ENCODE measurements at regions of chr15 and their contacts with region 1.

Region 1: GRCh38 chr15:59688841-59689625 is at the start of gene BNIP2:
- DNase-seq: peak; percentile 94 to 100 (median 99)
- ATAC-seq: peak; percentile 95
- H3K4me3 ChIP-seq: peak within 1 kb of the TSS; percentile 97
- H3K4me3 Mint-ChIP-seq: peak within 1 kb of the TSS; percentile 90 to 98 (median 96)
- H3K27ac ChIP-seq: peak within 1 kb of the TSS; percentile 97
- H3K27ac Mint-ChIP-seq: peak within 1 kb of the TSS; percentile 81 to 99 (median 99)
- H3K4me1 ChIP-seq: peaks cover 29 to 30% of the 10 kb centered on the region in 2 donors
- H3K4me1 Mint-ChIP-seq: peaks cover 35 to 57% (median 49%) of the 10 kb centered on the region in 7 donors
- H3K27me3 ChIP-seq: no peaks in the 10 kb centered on the region
- H3K27me3 Mint-ChIP-seq: no peaks in the 10 kb centered on the region
- total RNA-seq, gene BNIP2: 76.1 to 116 (median 87.0) TPM

Region 2: GRCh38 chr15:58749532-58750337 is 939.3 kb before region 1 on chr15 and contains the start of gene ADAM10:
- CTCF ChIA-PET with region 1: no interaction called
- POLR2A ChIA-PET with region 1: interaction called, 4 read pairs
- intact Hi-C with region 1: loop called (anchors 2 kb)
- DNase-seq: peak; percentile 84 to 98 (median 93)
- ATAC-seq: peak; percentile 96
- H3K4me3 ChIP-seq: peak within 1 kb of the TSS; percentile 66
- H3K4me3 Mint-ChIP-seq: peak within 1 kb of the TSS; percentile 89 to 99 (median 98)
- H3K27ac ChIP-seq: peak within 1 kb of the TSS; percentile 86
- H3K27ac Mint-ChIP-seq: peak within 1 kb of the TSS; percentile 85 to 96 (median 94)
- H3K4me1 ChIP-seq: peaks cover 17% of the 10 kb centered on the region in 2 donors
- H3K4me1 Mint-ChIP-seq: peaks cover 24 to 45% (median 42%) of the 10 kb centered on the region in 7 donors
- H3K27me3 ChIP-seq: no peaks in the 10 kb centered on the region
- H3K27me3 Mint-ChIP-seq: no peaks in the 10 kb centered on the region
- total RNA-seq, gene ADAM10: 119 to 170 (median 142) TPM

Region 3: DNA sequence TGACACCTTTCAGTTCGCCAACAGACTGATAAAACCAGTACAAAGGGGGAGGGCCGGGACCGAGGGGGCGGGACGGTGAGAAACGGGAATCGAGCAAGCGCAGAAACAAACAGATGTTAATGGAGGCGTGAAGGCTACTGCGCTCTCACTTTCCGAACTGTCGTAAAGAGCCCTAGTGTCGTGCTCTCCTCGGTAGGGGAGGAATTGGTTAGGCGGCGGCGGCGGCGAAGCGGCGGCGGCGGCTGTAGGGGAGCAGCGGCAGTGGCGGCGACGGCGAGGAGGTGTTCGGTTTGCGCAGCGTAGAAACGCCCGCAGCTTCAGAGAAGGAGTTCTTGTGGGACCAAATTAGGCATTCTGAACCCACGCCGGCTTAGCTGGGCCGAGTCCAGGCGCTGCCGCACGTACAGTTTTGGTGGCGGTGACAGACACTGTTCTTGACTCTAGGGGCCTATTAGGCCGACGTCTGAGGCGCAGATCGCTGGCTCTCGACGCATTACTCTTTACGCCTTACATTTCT is 701.5 kb before region 1 on chr15 and contains the start of gene RNF111:
- CTCF ChIA-PET with region 1: no interaction called
- POLR2A ChIA-PET with region 1: no interaction called
- intact Hi-C with region 1: loop called (anchors 1 to 5 kb)
- DNase-seq: peak; percentile 66 to 94 (median 90)
- ATAC-seq: peak; percentile 98
- H3K4me3 ChIP-seq: peak within 1 kb of the TSS; percentile 83
- H3K4me3 Mint-ChIP-seq: peak within 1 kb of the TSS; percentile 89 to 100 (median 96)
- H3K27ac ChIP-seq: peak within 1 kb of the TSS; percentile 91
- H3K27ac Mint-ChIP-seq: peak within 1 kb of the TSS; percentile 87 to 96 (median 94)
- H3K4me1 ChIP-seq: peaks cover 17 to 25% of the 10 kb centered on the region in 2 donors
- H3K4me1 Mint-ChIP-seq: peaks cover 33 to 56% (median 53%) of the 10 kb centered on the region in 7 donors
- H3K27me3 ChIP-seq: no peaks in the 10 kb centered on the region
- H3K27me3 Mint-ChIP-seq: peaks cover 0 to 13% (median 0%) of the 10 kb centered on the region in 5 donors
- total RNA-seq, gene RNF111: 50.8 to 61.1 (median 57.9) TPM

Region 4: GRCh38 chr15:59725172-59725486 is 36.1 kb after region 1 on chr15:
- CTCF ChIA-PET with region 1: no interaction called
- POLR2A ChIA-PET with region 1: no interaction called
- intact Hi-C with region 1: loop called in 1 of 2 experiments (anchors 2 kb)
- DNase-seq: no peak
- ATAC-seq: no peak
- H3K4me3 ChIP-seq: no peak overlapping the region
- H3K4me3 Mint-ChIP-seq: no peak overlapping the region
- H3K27ac ChIP-seq: no peak overlapping the region
- H3K27ac Mint-ChIP-seq: no peak overlapping the region
- H3K4me1 ChIP-seq: no peaks in the 10 kb centered on the region
- H3K4me1 Mint-ChIP-seq: peaks cover 0 to 3% (median 0%) of the 10 kb centered on the region in 7 donors
- H3K27me3 ChIP-seq: no peaks in the 10 kb centered on the region
- H3K27me3 Mint-ChIP-seq: peaks cover 0 to 30% (median 0%) of the 10 kb centered on the region in 5 donors

Region 5: DNA sequence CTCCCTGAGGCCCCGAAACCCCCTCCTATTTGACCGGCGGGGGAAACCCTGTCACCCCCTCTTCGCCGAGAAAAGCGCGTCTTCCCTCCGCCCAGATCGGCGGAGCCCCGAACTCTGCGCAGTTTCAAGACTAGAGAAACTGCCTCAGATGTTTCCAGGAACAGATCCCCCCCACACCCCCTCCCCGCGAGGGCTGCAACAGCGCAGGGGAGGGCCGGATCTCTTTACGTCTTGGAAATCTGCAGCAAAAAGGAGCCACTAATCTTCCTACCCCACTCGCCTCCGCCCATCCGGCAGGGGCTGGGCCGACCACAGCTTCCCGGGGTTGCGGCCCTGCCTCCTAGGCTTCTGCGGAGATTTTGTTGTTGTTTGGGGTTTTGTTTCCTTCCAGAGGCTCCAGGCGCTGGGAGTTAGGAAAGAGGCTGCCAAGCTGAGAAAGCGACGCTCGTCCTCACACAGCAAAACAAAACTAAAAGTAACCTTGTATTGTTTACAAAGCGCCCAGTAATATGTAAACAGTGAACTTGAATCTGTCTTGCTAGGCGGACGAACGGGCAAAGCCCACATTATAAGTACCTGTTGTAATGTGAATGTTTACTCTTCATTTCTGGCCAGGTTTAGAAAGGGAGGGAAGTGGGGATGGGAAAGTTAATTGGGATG is 317.3 kb after region 1 on chr15:
- CTCF ChIA-PET with region 1: no interaction called
- POLR2A ChIA-PET with region 1: no interaction called
- intact Hi-C with region 1: loop called (anchors 1 to 2 kb)
- DNase-seq: peak; percentile 37 to 81 (median 69)
- ATAC-seq: peak; percentile 82
- H3K4me3 ChIP-seq: peak overlapping the region; percentile 49
- H3K4me3 Mint-ChIP-seq: peak overlapping the region; percentile 80 to 97 (median 90)
- H3K27ac ChIP-seq: no peak overlapping the region
- H3K27ac Mint-ChIP-seq: peak overlapping the region; percentile 52 to 97 (median 86)
- H3K4me1 ChIP-seq: peaks cover 23 to 27% of the 10 kb centered on the region in 2 donors
- H3K4me1 Mint-ChIP-seq: peaks cover 26 to 52% (median 40%) of the 10 kb centered on the region in 7 donors
- H3K27me3 ChIP-seq: peaks cover 30 to 76% of the 10 kb centered on the region in 2 donors
- H3K27me3 Mint-ChIP-seq: peaks cover 74 to 94% (median 89%) of the 10 kb centered on the region in 5 donors

Region 6: DNA sequence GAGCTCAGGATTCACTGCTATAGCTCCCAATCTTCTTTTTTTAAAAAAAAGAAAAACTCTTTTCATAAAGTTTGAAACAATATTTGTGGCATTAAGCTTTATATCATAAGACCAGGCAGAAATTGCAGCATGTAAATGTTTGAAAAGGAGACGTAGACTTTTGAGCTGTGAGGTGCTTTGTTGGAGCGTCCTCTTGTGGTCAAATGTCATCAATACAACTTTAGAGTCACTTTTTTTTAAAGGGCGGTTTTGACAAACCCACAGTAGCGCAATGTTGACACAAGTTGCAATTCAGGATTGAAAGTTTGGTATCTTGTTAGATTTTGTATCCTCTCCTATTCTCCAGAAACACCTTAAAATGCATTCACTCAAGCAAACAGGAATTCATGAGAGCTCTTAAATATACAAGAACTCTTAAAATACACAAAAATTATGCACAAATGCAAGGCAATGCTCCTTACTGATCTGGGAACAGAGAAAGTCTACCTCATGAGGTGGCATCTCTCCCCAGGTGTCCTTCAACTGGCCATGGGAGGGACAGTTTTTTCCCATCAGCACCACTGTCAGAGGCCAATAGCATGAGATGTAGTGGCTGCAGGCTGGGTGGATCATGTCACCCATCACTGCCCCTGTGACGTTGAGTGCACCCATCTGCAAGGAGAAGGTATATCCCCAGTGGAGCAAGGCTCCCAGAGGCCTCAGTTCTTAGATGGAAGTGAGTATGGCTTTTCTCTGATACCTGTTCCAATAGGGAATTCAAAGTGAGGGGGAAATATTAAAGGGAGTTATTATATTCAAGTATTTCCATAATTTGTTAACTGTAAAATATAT is 638.0 kb after region 1 on chr15:
- CTCF ChIA-PET with region 1: interaction called, 6 read pairs
- POLR2A ChIA-PET with region 1: no interaction called
- intact Hi-C with region 1: loop called (anchors 1 kb)
- DNase-seq: peak in 7 of 9 donors; percentile 24 to 62 (median 56)
- ATAC-seq: peak; percentile 60
- H3K4me3 ChIP-seq: no peak overlapping the region
- H3K4me3 Mint-ChIP-seq: no peak overlapping the region
- H3K27ac ChIP-seq: no peak overlapping the region
- H3K27ac Mint-ChIP-seq: peak overlapping the region in 1 of 9 donors; percentile 2
- H3K4me1 ChIP-seq: no peaks in the 10 kb centered on the region
- H3K4me1 Mint-ChIP-seq: peaks cover 0 to 14% (median 4%) of the 10 kb centered on the region in 7 donors
- H3K27me3 ChIP-seq: peaks cover 0 to 10% of the 10 kb centered on the region in 2 donors
- H3K27me3 Mint-ChIP-seq: peaks cover 19 to 71% (median 35%) of the 10 kb centered on the region in 5 donors

Region 7: GRCh38 chr15:60592371-60593169 is 903.5 kb after region 1 on chr15:
- CTCF ChIA-PET with region 1: no interaction called
- POLR2A ChIA-PET with region 1: no interaction called
- intact Hi-C with region 1: loop called in 1 of 2 experiments (anchors 2 kb)
- DNase-seq: peak; percentile 72 to 89 (median 86)
- ATAC-seq: peak; percentile 95
- H3K4me3 ChIP-seq: peak overlapping the region; percentile 75
- H3K4me3 Mint-ChIP-seq: peak overlapping the region; percentile 84 to 89 (median 86)
- H3K27ac ChIP-seq: peak overlapping the region; percentile 96
- H3K27ac Mint-ChIP-seq: peak overlapping the region; percentile 83 to 93 (median 85)
- H3K4me1 ChIP-seq: peaks cover 6 to 29% of the 10 kb centered on the region in 2 donors
- H3K4me1 Mint-ChIP-seq: peaks cover 19 to 53% (median 48%) of the 10 kb centered on the region in 7 donors
- H3K27me3 ChIP-seq: no peaks in the 10 kb centered on the region
- H3K27me3 Mint-ChIP-seq: peaks cover 0 to 4% (median 0%) of the 10 kb centered on the region in 5 donors

Measured in naive thymus-derived CD4-positive, alpha-beta T cell (primary cell).